Activated naive CD4-positive, alpha-beta T cell treated with anti-CD3 and anti-CD28 coated beads for 36 hours (primary cell): ENCODE measurements at regions of chr12 and their contacts with region 1.

Region 1: DNA sequence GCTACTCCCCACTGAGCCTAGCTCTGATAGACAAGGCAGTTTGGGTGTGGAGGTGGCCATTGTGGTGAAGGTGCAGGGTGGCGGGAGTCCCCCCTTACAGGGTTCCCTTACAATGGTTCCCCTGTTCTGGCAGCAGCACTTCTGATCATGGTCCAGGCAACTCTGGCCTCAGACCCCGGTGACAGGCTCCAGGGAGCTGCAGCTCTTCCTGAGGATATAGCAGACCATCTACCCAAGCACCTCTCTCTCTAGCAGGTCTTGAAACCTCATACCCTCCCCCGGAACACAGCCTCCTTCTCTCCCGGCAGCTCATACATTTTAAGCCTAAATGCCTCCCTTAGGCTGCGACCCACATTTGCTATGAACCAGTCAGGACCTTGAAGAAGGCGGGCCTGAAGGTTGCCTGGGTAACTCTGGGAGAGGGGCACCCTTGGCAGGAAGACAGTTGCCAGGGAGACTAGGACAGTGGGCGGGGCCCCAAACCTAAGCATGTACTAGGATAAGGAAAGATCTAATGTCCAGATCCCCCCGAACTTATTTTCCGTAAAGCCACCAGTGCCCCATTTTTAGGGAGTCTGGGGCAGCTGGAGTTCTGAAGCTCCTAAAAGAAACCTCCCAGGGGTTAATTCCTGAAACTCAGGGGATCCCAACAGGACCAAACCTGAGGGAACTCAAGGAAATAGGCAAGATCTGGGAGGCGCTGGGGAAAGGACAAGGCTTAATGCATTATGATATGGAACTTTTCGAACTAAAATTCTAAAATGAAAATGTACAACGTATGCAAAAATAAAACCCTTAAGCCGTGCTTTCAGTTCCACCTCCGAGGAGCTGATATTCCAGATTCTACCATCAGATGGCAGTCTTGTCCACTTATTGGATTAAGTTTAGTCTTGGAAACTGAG is 4.5 kb upstream of the GDF11 start:
- DNase-seq: peak; percentile 89
- H3K4me3 Mint-ChIP-seq: peak overlapping the region; percentile 75
- H3K27ac Mint-ChIP-seq: peak overlapping the region; percentile 82
- H3K4me1 Mint-ChIP-seq: peaks cover 22% of the 10 kb centered on the region
- H3K27me3 Mint-ChIP-seq: no peaks in the 10 kb centered on the region

Region 2: GRCh38 chr12:54858562-54858961 is 879.8 kb before region 1 on chr12:
- CTCF ChIA-PET with region 1: no interaction called
- intact Hi-C with region 1: no loop called
- DNase-seq: peak; percentile 35
- H3K4me3 Mint-ChIP-seq: no peak overlapping the region
- H3K27ac Mint-ChIP-seq: no peak overlapping the region
- H3K4me1 Mint-ChIP-seq: peaks cover 28% of the 10 kb centered on the region
- H3K27me3 Mint-ChIP-seq: peaks cover 15% of the 10 kb centered on the region

Region 3: GRCh38 chr12:55188974-55189556 is 549.3 kb before region 1 on chr12:
- CTCF ChIA-PET with region 1: interaction called, 3 read pairs
- intact Hi-C with region 1: loop called (anchors 1 kb)
- DNase-seq: peak; percentile 70
- H3K4me3 Mint-ChIP-seq: no peak overlapping the region
- H3K27ac Mint-ChIP-seq: no peak overlapping the region
- H3K4me1 Mint-ChIP-seq: no peaks in the 10 kb centered on the region
- H3K27me3 Mint-ChIP-seq: peaks cover 22% of the 10 kb centered on the region

Region 4: DNA sequence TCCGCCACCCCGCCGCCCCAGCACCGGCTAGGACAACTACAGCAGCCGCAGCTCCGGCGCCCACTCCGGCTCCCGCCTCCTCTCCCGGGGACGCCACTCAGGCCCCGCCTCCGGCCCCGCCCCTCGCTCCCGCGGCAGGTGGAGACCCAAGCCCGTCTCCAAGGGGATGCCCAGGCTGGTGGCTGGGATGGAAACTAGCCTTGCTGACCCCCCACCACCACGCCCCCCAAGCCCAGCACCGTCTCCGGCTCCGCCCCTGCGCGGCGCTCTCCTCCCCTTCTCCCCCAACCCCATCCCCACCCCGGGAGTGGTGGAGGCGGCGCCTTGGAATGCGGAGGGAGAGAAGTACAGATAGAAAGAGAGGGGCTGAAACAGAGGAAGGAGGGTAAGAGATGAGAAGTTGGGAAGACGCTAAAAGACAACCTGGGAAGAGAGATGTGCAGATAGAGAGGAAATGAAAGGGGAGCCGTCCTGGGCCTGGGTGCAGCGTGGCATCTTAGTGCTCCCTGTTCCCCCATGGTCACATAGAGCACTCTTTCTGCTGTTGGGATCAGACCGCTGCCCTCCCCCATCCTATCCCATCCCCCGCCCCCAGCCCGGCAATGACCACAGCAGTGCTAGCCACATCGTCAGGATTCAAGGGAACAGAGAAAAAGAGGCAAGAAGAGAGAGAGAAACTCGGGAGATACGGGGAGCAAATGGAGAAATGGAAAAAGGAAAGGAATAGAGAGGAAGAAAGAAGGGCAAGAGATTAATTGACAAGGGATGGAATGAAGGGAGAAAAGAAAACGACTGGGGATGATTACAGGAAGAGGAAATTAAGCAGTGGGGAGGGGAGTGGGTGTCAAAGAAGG is 30.3 kb before region 1 on chr12 and contains the start of gene ITGA7:
- CTCF ChIA-PET with region 1: interaction called, 10 read pairs
- intact Hi-C with region 1: no loop called
- DNase-seq: peak; percentile 65
- H3K4me3 Mint-ChIP-seq: peak within 1 kb of the TSS; percentile 80
- H3K27ac Mint-ChIP-seq: no peak within 1 kb of the TSS
- H3K4me1 Mint-ChIP-seq: peaks cover 14% of the 10 kb centered on the region
- H3K27me3 Mint-ChIP-seq: peaks cover 25% of the 10 kb centered on the region
- total RNA-seq, gene ITGA7: 3.9 to 4.8 TPM

Region 5: DNA sequence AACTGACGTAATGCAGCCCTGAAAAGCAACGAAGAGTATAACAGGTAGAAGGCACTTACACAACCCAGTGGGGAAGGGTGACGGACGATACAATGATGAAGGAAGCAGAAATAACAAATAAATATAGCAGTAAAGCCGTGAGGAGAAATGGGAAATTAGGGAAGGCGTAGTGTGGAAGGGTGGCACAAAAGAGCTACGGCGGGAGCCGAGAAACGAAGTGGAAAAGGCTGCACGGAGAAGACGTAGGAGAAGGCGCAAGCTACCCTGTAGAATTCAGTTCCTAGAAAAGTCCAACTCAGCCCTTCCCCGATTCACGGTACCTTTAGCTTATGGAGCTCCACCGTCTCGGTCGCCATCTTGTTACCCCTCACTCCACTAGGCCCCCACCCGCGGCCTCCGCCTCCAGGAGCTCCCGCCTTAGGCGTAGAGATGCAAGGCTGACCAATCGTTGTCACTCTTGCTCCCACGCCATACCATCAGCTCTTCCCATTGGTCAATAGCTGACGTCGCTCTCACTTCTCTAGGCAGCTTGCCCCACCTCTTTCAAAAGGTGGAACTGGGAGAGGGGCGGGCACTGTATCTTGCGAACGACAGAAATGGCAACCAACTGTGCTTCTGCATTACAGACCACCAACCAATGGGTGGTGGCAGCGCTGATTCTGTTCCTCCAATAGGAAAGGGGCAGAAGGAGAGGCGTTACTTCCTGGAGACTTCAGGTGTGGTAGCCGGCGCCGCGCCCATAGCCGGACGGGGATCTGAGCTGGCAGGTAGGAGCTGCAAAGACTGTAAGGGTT is 79.2 kb after region 1 on chr12 and contains the starts of genes ORMDL2 and SARNP:
- CTCF ChIA-PET with region 1: interaction called, 5 read pairs
- intact Hi-C with region 1: loop called (anchors 1 kb)
- DNase-seq: peak; percentile 99
- H3K4me3 Mint-ChIP-seq: no peak within 1 kb of the TSS
- H3K27ac Mint-ChIP-seq: no peak within 1 kb of the TSS
- H3K4me1 Mint-ChIP-seq: peaks cover 43% of the 10 kb centered on the region
- H3K27me3 Mint-ChIP-seq: no peaks in the 10 kb centered on the region
- total RNA-seq, gene ORMDL2: 23.8 to 26.4 TPM
- total RNA-seq, gene SARNP: 100 to 101 TPM

Region 6: GRCh38 chr12:55940065-55940732 is 201.8 kb after region 1 on chr12:
- CTCF ChIA-PET with region 1: interaction called, 35 read pairs
- intact Hi-C with region 1: loop called (anchors 1 kb)
- DNase-seq: peak; percentile 94
- H3K4me3 Mint-ChIP-seq: no peak overlapping the region
- H3K27ac Mint-ChIP-seq: peak overlapping the region; percentile 74
- H3K4me1 Mint-ChIP-seq: peaks cover 72% of the 10 kb centered on the region
- H3K27me3 Mint-ChIP-seq: no peaks in the 10 kb centered on the region

Region 7: DNA sequence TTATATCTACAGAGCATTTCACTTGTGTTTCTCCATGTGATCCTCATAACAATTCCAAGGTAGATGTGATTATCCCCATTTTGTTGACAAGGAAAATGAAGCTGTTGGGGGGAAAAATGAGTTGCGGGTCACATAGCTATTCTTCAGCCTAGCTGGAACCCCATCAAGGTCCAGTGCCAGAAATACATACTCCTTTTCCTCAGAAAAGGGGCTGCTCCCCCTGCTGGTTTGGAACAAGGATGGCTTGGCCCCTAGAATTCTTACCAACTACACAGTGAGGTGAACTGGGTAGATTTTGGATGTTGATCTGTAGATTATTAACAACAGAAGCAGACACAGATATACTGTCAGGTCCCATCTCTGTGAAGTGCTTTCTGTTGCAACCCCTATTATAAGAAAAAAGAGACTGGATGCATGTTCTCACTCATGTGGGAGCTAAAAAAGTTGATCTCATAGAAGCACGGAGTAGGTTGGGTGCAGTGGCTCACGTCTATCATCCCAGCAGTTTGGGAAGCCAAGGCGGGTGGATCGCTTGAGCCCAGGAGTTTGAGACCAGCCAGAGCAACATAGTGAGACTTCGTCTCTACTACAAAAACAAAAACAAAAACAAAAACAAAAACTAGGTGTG is 291.4 kb after region 1 on chr12:
- CTCF ChIA-PET with region 1: interaction called, 9 read pairs
- intact Hi-C with region 1: loop called (anchors 1 kb)
- DNase-seq: peak; percentile 65
- H3K4me3 Mint-ChIP-seq: no peak overlapping the region
- H3K27ac Mint-ChIP-seq: no peak overlapping the region
- H3K4me1 Mint-ChIP-seq: peaks cover 24% of the 10 kb centered on the region
- H3K27me3 Mint-ChIP-seq: no peaks in the 10 kb centered on the region

Region 8: DNA sequence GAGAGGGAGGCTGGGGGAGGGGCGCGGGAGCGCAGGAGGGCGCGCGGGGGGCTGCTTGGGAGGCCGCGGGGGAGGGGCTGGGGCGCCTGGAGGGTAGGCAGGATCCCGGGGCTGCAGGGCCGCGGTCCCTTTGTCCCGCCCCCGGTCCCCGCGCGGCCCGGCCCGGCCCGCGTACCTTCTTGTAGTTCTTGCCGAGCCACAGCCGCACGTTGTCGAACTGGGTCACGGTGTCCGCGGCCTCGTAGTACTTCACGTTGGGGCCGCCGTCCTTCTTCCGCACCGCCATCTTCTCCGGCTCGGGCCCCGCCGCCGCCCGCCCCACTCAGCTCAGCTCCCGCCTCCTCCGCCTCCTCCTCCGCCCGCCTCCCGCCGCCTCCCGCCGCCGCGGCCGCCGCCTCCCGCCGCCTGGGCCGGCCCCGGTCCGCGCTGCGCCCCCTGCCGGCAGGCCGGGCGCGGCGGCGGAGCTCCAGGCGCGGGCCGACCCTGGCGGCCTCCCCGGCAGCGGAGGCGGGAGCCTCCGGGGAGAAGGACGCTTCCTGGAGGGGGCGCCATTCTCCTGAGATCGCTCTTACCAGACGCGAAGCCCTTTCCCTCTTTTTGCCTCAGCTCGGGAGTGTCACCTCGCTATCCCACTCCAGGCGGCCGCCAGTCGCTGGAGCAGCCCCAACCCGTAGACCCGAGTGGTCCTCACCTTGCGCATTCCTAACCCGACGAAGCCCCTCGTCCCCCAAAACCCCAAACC is 451.0 kb after region 1 on chr12 and contains the start of gene SMARCC2:
- CTCF ChIA-PET with region 1: interaction called, 3 read pairs
- intact Hi-C with region 1: loop called (anchors 10 kb)
- DNase-seq: peak; percentile 93
- H3K4me3 Mint-ChIP-seq: peak within 1 kb of the TSS; percentile 95
- H3K27ac Mint-ChIP-seq: peak within 1 kb of the TSS; percentile 92
- H3K4me1 Mint-ChIP-seq: peaks cover 33% of the 10 kb centered on the region
- H3K27me3 Mint-ChIP-seq: no peaks in the 10 kb centered on the region
- total RNA-seq, gene SMARCC2: 75.8 to 79.0 TPM